CD8-positive, alpha-beta T cell (primary cell): ENCODE measurements at regions of chr7 and their contacts with region 1.

Region 1: GRCh38 chr7:332646-333392 is 42.8 kb downstream of the FOXL3 start:
- DNase-seq: peak; percentile 76 to 98 (median 88)
- ATAC-seq: peak; percentile 92
- H3K4me3 ChIP-seq: peak overlapping the region; percentile 34 to 52
- H3K4me3 Mint-ChIP-seq: peak overlapping the region; percentile 22
- H3K27ac ChIP-seq: no peak overlapping the region
- H3K27ac Mint-ChIP-seq: no peak overlapping the region
- H3K4me1 ChIP-seq: peaks cover 18% of the 10 kb centered on the region
- H3K4me1 Mint-ChIP-seq: peaks cover 11% of the 10 kb centered on the region
- H3K27me3 ChIP-seq: no peaks in the 10 kb centered on the region
- H3K27me3 Mint-ChIP-seq: no peaks in the 10 kb centered on the region
- CTCF ChIP-seq: peak; percentile 69

Region 2: GRCh38 chr7:351681-352480 is 19.1 kb after region 1 on chr7:
- CTCF ChIA-PET with region 1: interaction called, 5 read pairs
- POLR2A ChIA-PET with region 1: interaction called, 10 read pairs
- intact Hi-C with region 1: no loop called
- DNase-seq: peak in 8 of 9 experiments; percentile 47 to 79 (median 70)
- ATAC-seq: peak; percentile 62
- H3K4me3 ChIP-seq: peak overlapping the region; percentile 53 to 74
- H3K4me3 Mint-ChIP-seq: no peak overlapping the region
- H3K27ac ChIP-seq: peak overlapping the region; percentile 74 to 80
- H3K27ac Mint-ChIP-seq: no peak overlapping the region
- H3K4me1 ChIP-seq: peaks cover 20% of the 10 kb centered on the region
- H3K4me1 Mint-ChIP-seq: peaks cover 20% of the 10 kb centered on the region
- H3K27me3 ChIP-seq: no peaks in the 10 kb centered on the region
- H3K27me3 Mint-ChIP-seq: no peaks in the 10 kb centered on the region
- CTCF ChIP-seq: no peak

Region 3: DNA sequence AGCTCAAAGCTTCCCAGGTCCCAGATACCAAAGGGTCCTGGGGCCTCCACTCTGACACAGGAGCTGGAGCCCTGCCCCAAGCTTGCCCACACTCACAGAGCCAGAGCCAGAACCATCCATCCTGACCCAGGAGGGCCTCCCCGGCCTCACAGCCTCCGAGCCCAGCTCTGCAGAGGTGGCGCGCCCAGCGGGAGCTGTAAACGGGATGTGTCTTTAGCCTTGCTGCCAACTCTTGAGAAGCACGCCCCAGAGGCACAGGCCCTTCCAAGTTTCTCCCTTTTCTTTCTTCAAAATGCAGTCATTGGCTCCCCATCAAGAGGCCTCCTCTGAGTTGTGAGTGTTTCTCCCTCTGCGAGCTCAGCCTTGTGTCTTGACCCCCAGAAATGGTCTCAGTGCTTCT is 111.8 kb after region 1 on chr7:
- CTCF ChIA-PET with region 1: interaction called, 3 read pairs
- POLR2A ChIA-PET with region 1: no interaction called
- intact Hi-C with region 1: loop called in 1 of 2 experiments (anchors 10 kb)
- DNase-seq: no peak
- ATAC-seq: no peak
- H3K4me3 ChIP-seq: no peak overlapping the region
- H3K4me3 Mint-ChIP-seq: no peak overlapping the region
- H3K27ac ChIP-seq: no peak overlapping the region
- H3K27ac Mint-ChIP-seq: no peak overlapping the region
- H3K4me1 ChIP-seq: no peaks in the 10 kb centered on the region
- H3K4me1 Mint-ChIP-seq: no peaks in the 10 kb centered on the region
- H3K27me3 ChIP-seq: no peaks in the 10 kb centered on the region
- H3K27me3 Mint-ChIP-seq: no peaks in the 10 kb centered on the region
- CTCF ChIP-seq: no peak

Region 4: DNA sequence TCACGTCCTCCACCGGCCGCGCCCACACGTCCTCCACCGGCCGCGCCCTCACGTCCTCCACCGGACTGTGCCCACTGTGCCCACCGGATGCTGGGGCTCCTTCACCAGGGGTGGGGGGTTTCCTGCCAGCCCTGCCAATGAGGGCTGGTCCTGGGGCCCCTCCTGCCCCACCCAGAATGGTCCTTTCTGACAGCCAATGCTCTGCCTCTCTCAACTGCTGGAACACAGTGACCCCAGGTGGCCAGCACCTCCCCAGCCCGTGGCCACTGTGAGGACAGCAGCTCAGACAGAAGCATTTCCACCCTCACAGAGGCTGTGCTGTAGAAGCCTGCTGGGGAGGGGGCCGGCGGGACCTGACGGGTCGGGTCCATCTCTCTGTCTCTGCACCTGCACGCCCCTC is 303.6 kb after region 1 on chr7:
- CTCF ChIA-PET with region 1: interaction called, 6 read pairs
- POLR2A ChIA-PET with region 1: no interaction called
- intact Hi-C with region 1: loop called in 1 of 2 experiments (anchors 1 kb)
- DNase-seq: peak in 8 of 9 experiments; percentile 33 to 74 (median 62)
- ATAC-seq: peak; percentile 79
- H3K4me3 ChIP-seq: no peak overlapping the region
- H3K4me3 Mint-ChIP-seq: no peak overlapping the region
- H3K27ac ChIP-seq: no peak overlapping the region
- H3K27ac Mint-ChIP-seq: no peak overlapping the region
- H3K4me1 ChIP-seq: peaks cover 8% of the 10 kb centered on the region
- H3K4me1 Mint-ChIP-seq: peaks cover 16% of the 10 kb centered on the region
- H3K27me3 ChIP-seq: no peaks in the 10 kb centered on the region
- H3K27me3 Mint-ChIP-seq: no peaks in the 10 kb centered on the region
- CTCF ChIP-seq: peak; percentile 35

Region 5: GRCh38 chr7:774161-775109 is 441.6 kb after region 1 on chr7:
- CTCF ChIA-PET with region 1: interaction called, 60 read pairs
- POLR2A ChIA-PET with region 1: no interaction called
- intact Hi-C with region 1: loop called in 1 of 2 experiments (anchors 1 kb)
- DNase-seq: peak; percentile 32 to 80 (median 61)
- ATAC-seq: peak; percentile 93
- H3K4me3 ChIP-seq: no peak overlapping the region
- H3K4me3 Mint-ChIP-seq: no peak overlapping the region
- H3K27ac ChIP-seq: no peak overlapping the region
- H3K27ac Mint-ChIP-seq: no peak overlapping the region
- H3K4me1 ChIP-seq: no peaks in the 10 kb centered on the region
- H3K4me1 Mint-ChIP-seq: no peaks in the 10 kb centered on the region
- H3K27me3 ChIP-seq: no peaks in the 10 kb centered on the region
- H3K27me3 Mint-ChIP-seq: no peaks in the 10 kb centered on the region
- CTCF ChIP-seq: peak; percentile 93